Ascending aorta (tissue), 2 donors: ENCODE measurements at regions of chr1 and their contacts with region 1.

Region 1: DNA sequence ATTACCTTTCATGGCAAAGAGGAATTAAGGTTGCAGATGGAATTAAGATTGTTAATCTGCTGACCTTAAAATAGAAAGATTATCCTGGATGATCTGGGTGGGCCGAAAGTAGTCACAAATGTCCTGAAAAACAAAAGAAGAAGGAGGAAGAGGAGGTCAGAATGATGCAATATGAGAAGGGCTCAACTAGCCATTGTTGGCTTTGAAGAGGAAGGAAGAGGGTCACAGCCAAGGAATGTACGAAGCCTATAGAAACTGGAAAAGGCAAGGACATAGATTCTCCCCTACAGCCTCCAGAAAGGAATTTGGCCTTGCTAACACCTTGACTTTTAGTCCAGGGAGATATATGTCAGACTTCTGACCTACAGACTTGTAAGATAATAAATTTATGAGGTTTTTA is 39.4 kb upstream of the FMOD start:
- DNase-seq: no peak
- H3K4me3 ChIP-seq: no peak overlapping the region
- H3K27ac ChIP-seq: no peak overlapping the region
- H3K4me1 ChIP-seq: no peaks in the 10 kb centered on the region
- H3K27me3 ChIP-seq: no peaks in the 10 kb centered on the region
- CTCF ChIP-seq: no peak

Region 2: DNA sequence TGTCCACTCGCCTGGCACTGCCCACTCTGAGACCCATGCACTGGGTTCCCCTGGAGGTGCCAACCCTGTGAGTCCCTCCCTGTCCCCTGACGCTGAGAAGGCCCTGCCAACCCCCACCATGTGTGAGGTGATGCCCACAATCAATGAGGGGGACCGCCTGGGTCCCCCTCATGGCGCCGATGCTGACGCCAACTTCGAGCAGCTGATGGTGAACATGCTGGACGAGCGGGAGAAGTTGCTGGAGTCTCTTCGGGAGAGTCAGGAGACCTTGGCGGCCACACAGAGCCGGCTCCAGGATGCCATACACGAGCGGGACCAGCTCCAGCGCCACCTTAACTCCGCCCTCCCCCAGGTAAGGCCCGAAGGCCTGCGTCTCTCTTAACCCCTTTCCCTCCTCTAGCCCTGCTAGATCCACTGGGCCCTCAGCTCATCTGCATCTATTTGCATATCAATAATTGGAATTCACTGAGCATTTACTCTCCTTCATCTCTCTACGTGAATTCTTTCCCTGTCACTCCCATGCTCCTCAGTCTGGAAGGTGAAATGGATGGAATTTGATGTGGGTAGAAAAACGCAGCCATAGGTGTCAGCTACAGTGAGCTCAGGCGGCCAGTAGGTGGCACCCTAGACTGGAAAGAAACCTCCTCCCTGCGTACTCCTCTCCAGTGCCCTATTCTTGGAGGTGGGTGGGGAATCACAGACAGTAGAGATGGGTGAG is 351.2 kb before region 1 on chr1:
- intact Hi-C with region 1: no loop called
- DNase-seq: peak in 1 of 2 donors; percentile 85
- H3K4me3 ChIP-seq: peak overlapping the region in 1 of 2 donors; percentile 19
- H3K27ac ChIP-seq: peak overlapping the region; percentile 87 to 92
- H3K4me1 ChIP-seq: peaks cover 16 to 23% of the 10 kb centered on the region in 2 donors
- H3K27me3 ChIP-seq: no peaks in the 10 kb centered on the region
- CTCF ChIP-seq: peak; percentile 83 to 88 (median 86)

Region 3: GRCh38 chr1:203373991-203374390 is 16.3 kb before region 1 on chr1:
- intact Hi-C with region 1: loop called (anchors 2 kb)
- DNase-seq: no peak
- H3K4me3 ChIP-seq: no peak overlapping the region
- H3K27ac ChIP-seq: peak overlapping the region in 1 of 2 donors; percentile 46
- H3K4me1 ChIP-seq: peaks cover under 1 to 20% of the 10 kb centered on the region in 2 donors
- H3K27me3 ChIP-seq: no peaks in the 10 kb centered on the region
- CTCF ChIP-seq: no peak